CD4-positive, alpha-beta T cell (primary cell): ENCODE measurements at regions of chr7 and their contacts with region 1.

Region 1: GRCh38 chr7:44986218-44987053 is 7.6 kb upstream of the MYO1G start:
- DNase-seq: peak; percentile 86 to 99 (median 94)
- ATAC-seq: peak; percentile 93
- H3K4me3 ChIP-seq: peak overlapping the region; percentile 74
- H3K4me3 Mint-ChIP-seq: peak overlapping the region; percentile 95
- H3K27ac ChIP-seq: peak overlapping the region; percentile 94 to 95
- H3K27ac Mint-ChIP-seq: peak overlapping the region; percentile 95
- H3K4me1 ChIP-seq: peaks cover 52% of the 10 kb centered on the region
- H3K4me1 Mint-ChIP-seq: peaks cover 50% of the 10 kb centered on the region
- H3K27me3 ChIP-seq: no peaks in the 10 kb centered on the region
- H3K27me3 Mint-ChIP-seq: no peaks in the 10 kb centered on the region
- CTCF ChIP-seq: no peak

Region 2: GRCh38 chr7:44348300-44348699 is 638.1 kb before region 1 on chr7:
- CTCF ChIA-PET with region 1: no interaction called
- POLR2A ChIA-PET with region 1: no interaction called
- intact Hi-C with region 1: no loop called
- DNase-seq: peak in 4 of 14 experiments; percentile 4 to 37 (median 16)
- ATAC-seq: no peak
- H3K4me3 ChIP-seq: no peak overlapping the region
- H3K4me3 Mint-ChIP-seq: no peak overlapping the region
- H3K27ac ChIP-seq: no peak overlapping the region
- H3K27ac Mint-ChIP-seq: no peak overlapping the region
- H3K4me1 ChIP-seq: no peaks in the 10 kb centered on the region
- H3K4me1 Mint-ChIP-seq: no peaks in the 10 kb centered on the region
- H3K27me3 ChIP-seq: no peaks in the 10 kb centered on the region
- H3K27me3 Mint-ChIP-seq: peaks cover 26% of the 10 kb centered on the region
- CTCF ChIP-seq: no peak

Region 3: DNA sequence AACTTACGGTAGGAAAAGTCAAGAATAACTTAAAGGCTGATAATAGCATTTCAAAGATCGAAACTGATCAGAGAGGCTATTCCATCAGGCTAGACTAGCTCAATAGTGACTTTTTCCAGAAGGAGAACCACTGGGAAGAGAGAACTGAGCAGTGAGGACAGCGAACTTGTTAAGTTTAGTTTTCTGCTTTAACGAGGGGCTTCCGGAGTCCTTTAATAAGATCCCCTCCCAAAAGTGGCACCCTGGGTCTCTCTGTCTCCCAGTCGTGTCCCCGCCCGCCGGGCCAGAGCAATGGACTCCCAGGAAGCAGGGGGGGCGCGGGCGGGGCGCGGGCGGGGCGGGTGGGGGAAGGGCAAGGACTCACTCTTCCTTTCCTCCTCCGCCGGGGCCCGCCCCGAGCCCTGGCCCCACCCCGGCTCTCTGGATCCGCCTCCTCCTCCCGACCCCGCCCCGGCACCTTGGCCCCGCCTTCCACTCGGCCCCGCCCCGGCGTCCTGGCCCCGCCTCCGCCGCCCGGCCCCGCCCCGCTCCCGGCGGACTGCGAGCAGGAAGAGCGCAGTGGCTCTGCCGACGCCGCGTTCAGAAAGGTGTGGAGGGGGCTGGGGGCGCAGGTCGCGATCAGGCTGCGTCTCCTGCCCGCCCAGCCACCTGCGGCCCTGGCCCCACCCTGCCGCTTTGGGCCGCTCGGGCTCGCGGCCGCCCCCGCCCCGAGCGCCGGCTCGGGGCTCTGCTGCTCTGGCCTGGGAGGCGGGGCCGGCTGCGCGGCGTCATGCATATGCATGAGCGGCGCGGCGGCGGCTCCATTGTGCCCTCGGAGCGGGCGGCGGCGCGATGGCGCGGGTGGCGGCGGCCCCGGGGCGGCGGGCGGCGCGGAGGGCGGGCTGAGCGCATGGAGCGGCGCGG is 238.1 kb before region 1 on chr7 and contains the start of gene ZMIZ2:
- CTCF ChIA-PET with region 1: no interaction called
- POLR2A ChIA-PET with region 1: no interaction called
- intact Hi-C with region 1: loop called in 1 of 2 experiments (anchors 5 kb)
- DNase-seq: peak; percentile 85 to 97 (median 92)
- ATAC-seq: peak; percentile 85
- H3K4me3 ChIP-seq: peak within 1 kb of the TSS; percentile 87
- H3K4me3 Mint-ChIP-seq: peak within 1 kb of the TSS; percentile 84
- H3K27ac ChIP-seq: peak within 1 kb of the TSS; percentile 70 to 75
- H3K27ac Mint-ChIP-seq: peak within 1 kb of the TSS; percentile 86
- H3K4me1 ChIP-seq: peaks cover 37% of the 10 kb centered on the region
- H3K4me1 Mint-ChIP-seq: peaks cover 43% of the 10 kb centered on the region
- H3K27me3 ChIP-seq: no peaks in the 10 kb centered on the region
- H3K27me3 Mint-ChIP-seq: no peaks in the 10 kb centered on the region
- CTCF ChIP-seq: no peak
- total RNA-seq, gene ZMIZ2: 81.5 to 82.0 TPM

Region 4: GRCh38 chr7:44962483-44963251 is 23.8 kb before region 1 on chr7:
- CTCF ChIA-PET with region 1: no interaction called
- POLR2A ChIA-PET with region 1: no interaction called
- intact Hi-C with region 1: no loop called
- DNase-seq: peak in 1 of 14 experiments; percentile 42
- ATAC-seq: no peak
- H3K4me3 ChIP-seq: no peak overlapping the region
- H3K4me3 Mint-ChIP-seq: no peak overlapping the region
- H3K27ac ChIP-seq: peak overlapping the region in 1 of 2 donors; percentile 7
- H3K27ac Mint-ChIP-seq: no peak overlapping the region
- H3K4me1 ChIP-seq: peaks cover 22% of the 10 kb centered on the region
- H3K4me1 Mint-ChIP-seq: peaks cover 17% of the 10 kb centered on the region
- H3K27me3 ChIP-seq: no peaks in the 10 kb centered on the region
- H3K27me3 Mint-ChIP-seq: no peaks in the 10 kb centered on the region
- CTCF ChIP-seq: no peak

Region 5: DNA sequence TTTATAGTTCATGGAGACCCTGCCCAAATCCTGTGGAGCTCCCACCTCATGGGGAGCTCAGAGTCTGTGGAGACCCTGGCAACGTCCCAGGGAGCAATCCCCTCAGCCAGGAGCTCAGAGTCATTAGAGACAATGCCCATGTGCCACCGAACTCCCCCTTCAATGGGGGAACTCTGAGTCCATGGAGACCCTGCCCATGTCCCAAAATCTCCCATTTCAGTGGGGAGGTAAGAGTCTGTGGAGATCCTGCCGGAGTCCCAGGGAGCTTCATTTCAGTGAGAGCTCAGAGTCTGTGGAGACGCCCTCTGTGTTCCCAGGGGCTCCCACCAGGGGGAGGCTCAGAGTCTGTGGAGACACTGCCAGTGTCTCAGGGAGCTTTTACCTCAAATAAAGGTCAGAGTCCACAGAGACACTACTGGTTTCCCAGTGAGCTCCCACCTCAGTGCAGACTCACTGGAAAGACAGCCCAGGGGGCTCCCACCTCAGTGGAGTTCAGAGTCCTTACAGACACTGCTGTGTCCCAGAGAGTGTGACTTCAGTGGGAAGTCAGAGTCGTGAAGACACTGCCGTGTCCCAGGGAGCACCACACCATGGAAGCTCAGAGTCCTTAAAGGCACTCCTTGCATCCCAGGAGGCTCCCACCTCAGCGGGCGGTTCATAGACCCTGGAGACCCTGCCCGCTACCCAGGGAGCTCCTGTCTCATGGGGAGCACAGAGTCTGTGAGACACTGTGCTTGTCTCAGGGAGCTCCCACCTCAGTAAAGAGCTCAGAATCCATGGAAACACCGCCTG is 12.6 kb before region 1 on chr7:
- CTCF ChIA-PET with region 1: interaction called, 4 read pairs
- POLR2A ChIA-PET with region 1: interaction called, 11 read pairs
- intact Hi-C with region 1: no loop called
- DNase-seq: peak; percentile 45 to 78 (median 65)
- ATAC-seq: peak; percentile 48
- H3K4me3 ChIP-seq: no peak overlapping the region
- H3K4me3 Mint-ChIP-seq: peak overlapping the region; percentile 25
- H3K27ac ChIP-seq: peak overlapping the region in 1 of 2 donors; percentile 1
- H3K27ac Mint-ChIP-seq: peak overlapping the region; percentile 95
- H3K4me1 ChIP-seq: peaks cover 73% of the 10 kb centered on the region
- H3K4me1 Mint-ChIP-seq: peaks cover 45% of the 10 kb centered on the region
- H3K27me3 ChIP-seq: no peaks in the 10 kb centered on the region
- H3K27me3 Mint-ChIP-seq: no peaks in the 10 kb centered on the region
- CTCF ChIP-seq: peak; percentile 67